GM12878 (cell line): ENCODE measurements at regions of chr1 and their contacts with region 1.

Region 1: GRCh38 chr1:115717541-115717940 is 51.0 kb downstream of the CASQ2 start:
- DNase-seq: no peak
- ATAC-seq: peak; percentile 83
- H3K4me3 ChIP-seq: no peak overlapping the region
- H3K27ac ChIP-seq: no peak overlapping the region
- H3K4me1 ChIP-seq: no peaks in the 10 kb centered on the region
- H3K27me3 ChIP-seq: no peaks in the 10 kb centered on the region; a peak in 2 of 4 replicates
- CTCF ChIP-seq: peak; percentile 58 to 61 (median 58); a peak in 5 of 6 replicates
- EP300 ChIP-seq: no peak
- POLR2A ChIP-seq: no peak
- RAD21 ChIP-seq: peak; percentile 93

Region 2: DNA sequence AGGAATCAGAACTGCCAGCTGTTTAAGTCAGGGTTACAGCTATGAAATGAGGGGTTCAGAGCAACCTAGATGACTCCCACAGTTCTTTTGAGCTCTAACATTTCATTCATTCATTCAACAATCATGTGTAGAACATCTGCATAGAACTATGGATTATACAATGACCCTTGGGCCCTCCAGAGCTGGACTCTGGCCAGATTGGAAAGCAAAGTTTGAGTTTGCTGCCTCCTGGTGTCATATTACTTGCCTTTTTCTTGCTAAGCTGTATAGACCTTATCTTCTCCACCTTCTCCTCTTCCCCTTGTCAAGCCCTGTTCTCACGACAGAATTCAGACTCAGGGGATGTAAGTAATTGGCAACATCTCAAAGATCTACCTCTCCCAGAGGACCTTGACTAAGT is 47.0 kb after region 1 on chr1:
- CTCF ChIA-PET with region 1: interaction called, 72 read pairs
- POLR2A ChIA-PET with region 1: no interaction called
- RAD21 ChIA-PET with region 1: interaction called, 8 read pairs
- SMC1A ChIA-PET with region 1: interaction called, 21 read pairs
- in situ Hi-C with region 1: no loop called
- intact Hi-C with region 1: no loop called
- DNase-seq: no peak
- ATAC-seq: peak; percentile 38; the same call in 1 of the 3 replicates
- H3K4me3 ChIP-seq: no peak overlapping the region
- H3K27ac ChIP-seq: no peak overlapping the region
- H3K4me1 ChIP-seq: no peaks in the 10 kb centered on the region
- H3K27me3 ChIP-seq: no peaks in the 10 kb centered on the region; a peak in 1 of 4 replicates
- CTCF ChIP-seq: peak; percentile 25 to 41 (median 37); a peak in 4 of 6 replicates
- EP300 ChIP-seq: no peak
- POLR2A ChIP-seq: no peak
- RAD21 ChIP-seq: peak; percentile 55